Sigmoid colon (tissue), 7 donors: ENCODE measurements at regions of chr14 and their contacts with region 1.

Region 1: DNA sequence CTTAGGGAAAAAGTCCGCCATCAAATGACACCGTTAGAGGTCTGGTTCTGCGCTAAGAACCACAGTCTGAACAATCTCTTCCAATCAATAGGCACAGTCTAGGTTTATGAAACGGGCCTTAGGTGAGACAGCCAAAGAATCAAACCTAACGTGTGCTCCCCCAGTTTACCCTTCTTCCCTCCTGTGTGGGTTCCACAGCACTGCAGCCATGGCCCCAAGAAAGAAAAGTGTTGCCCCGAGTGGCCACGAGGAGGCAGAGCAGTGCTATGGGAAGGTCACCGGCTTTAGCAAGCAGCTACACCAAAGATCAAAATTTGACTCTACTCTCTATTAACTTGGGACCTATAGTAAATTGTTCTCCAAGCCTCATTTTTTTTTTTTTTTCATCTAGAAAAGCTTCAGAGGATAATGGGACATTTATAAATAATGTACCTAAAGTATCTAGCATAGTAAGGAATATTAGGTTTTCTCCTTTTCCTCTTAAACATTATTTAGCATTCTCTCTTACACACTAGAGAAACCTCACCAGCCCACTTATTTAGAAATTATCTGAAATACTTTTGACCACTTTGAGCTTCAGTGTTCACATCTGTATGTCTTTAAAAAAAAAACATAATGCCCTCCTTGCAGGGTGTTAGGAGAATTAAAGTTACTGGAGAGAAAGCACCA is 70.2 kb upstream of the GPHB5 start:
- DNase-seq: peak; percentile 78
- H3K4me3 ChIP-seq: no peak overlapping the region
- H3K27ac ChIP-seq: no peak overlapping the region
- H3K4me1 ChIP-seq: no peaks in the 10 kb centered on the region
- H3K27me3 ChIP-seq: no peaks in the 10 kb centered on the region
- CTCF ChIP-seq: peak; percentile 74 to 80 (median 76)
- EP300 ChIP-seq: no peak
- POLR2A ChIP-seq: no peak

Region 2: DNA sequence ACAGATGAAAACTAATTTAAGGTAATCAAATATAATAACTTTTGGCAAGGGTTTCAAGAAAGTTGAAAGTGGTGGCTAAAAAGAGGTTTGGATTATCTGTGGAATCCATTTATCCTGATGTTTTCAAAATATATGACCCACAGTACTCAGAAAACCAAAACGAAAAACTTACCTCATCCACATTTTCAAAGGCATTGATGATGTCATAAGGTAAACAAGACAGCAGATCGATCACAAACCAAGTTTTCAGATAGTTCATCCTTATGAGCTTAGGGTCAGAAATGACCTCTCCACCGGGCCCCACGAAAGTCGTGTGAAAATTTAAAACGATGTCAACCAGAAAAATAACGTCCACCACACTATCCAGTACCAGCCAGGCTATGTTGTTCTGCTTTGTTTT is 408.2 kb before region 1 on chr14:
- intact Hi-C with region 1: no loop called
- DNase-seq: no peak
- H3K4me3 ChIP-seq: no peak overlapping the region
- H3K27ac ChIP-seq: no peak overlapping the region
- H3K4me1 ChIP-seq: no peaks in the 10 kb centered on the region
- H3K27me3 ChIP-seq: no peaks in the 10 kb centered on the region
- CTCF ChIP-seq: no peak
- EP300 ChIP-seq: no peak
- POLR2A ChIP-seq: no peak

Region 3: DNA sequence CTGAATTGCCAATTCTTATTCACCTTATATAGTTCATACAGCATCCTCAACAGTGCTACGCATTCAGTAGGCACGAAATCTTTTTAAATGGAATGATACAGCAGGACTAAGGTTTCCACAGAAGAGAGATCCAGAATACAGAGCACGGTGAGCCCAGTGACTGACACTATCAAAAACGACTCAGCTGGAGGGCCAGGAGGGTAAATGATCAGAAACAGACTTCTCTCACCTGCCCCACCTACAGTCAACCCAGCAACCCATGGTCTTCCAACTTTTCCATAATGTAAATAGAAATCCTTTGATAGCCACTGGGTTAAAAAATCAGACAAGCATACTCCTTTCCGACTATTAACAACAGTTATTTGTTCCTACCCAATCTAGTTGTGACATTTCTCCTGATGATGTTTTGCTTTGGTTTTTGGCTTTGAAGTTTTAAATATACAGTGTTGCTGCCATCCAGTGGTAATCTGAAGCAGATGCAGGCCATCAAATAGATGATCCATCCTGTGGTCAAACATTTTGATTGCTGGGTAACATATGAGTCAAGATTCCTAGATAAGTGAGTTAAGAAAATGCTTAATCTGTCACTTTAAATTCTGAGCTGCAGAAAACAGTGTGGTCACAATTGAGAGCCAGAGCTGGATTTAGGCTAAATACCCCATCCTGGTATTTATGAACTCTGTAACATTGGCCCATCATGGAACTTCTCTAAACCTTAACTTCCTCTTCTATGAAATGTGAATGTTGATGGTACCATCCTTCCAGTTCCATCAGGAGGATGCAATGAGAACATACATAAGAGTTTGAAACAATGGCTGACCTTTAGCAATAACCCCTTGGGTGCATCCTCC is 112.2 kb before region 1 on chr14:
- intact Hi-C with region 1: no loop called
- DNase-seq: no peak
- H3K4me3 ChIP-seq: no peak overlapping the region
- H3K27ac ChIP-seq: no peak overlapping the region
- H3K4me1 ChIP-seq: peaks cover 0 to 5% (median 0%) of the 10 kb centered on the region in 4 donors
- H3K27me3 ChIP-seq: no peaks in the 10 kb centered on the region
- CTCF ChIP-seq: peak; percentile 65 to 81 (median 76)
- EP300 ChIP-seq: no peak
- POLR2A ChIP-seq: no peak

Region 4: GRCh38 chr14:63641473-63642228 is 252.8 kb after region 1 on chr14 and contains the start of gene WDR89:
- intact Hi-C with region 1: loop called (anchors 1 kb)
- DNase-seq: peak; percentile 99
- H3K4me3 ChIP-seq: peak within 1 kb of the TSS; percentile 42 to 69 (median 54)
- H3K27ac ChIP-seq: peak within 1 kb of the TSS; percentile 84 to 95 (median 89)
- H3K4me1 ChIP-seq: peaks cover 0 to 12% (median 6%) of the 10 kb centered on the region in 4 donors
- H3K27me3 ChIP-seq: no peaks in the 10 kb centered on the region
- CTCF ChIP-seq: peak; percentile 45 to 85 (median 75)
- EP300 ChIP-seq: peak in 1 of 4 donors; percentile 10
- POLR2A ChIP-seq: peak in 1 of 2 donors; percentile 46
- total RNA-seq, gene WDR89: 5.0 to 10.0 (median 7.9) TPM

Region 5: DNA sequence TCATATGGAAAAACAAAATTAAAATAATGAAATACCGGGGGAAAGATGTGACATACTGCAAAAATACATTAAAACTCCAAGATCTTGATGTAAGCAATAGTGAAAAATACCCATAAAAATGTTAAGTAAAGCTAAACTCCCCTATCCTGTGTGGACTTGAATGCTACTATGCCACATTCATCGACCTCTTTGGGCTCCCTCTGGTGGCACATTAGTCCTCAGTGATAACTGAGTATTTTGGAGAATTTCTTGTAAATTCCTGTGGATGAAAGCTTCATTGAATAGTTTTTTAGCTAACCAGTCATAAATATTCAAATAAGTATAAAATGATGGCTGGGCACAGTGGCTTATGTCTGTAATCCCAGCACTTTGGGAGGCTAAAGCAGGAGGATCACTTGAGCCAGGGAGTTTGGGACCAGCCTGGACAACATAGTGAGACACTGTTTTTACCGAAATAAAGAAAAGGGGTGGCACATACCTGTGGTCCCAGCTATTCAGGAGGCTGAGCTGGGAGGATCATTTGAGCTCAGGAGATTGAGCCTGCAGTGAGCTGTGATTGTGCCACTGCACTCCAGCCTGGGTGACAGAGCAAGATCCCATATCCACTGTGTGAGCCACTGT is 381.4 kb after region 1 on chr14:
- intact Hi-C with region 1: loop called (anchors 2 kb)
- DNase-seq: no peak
- H3K4me3 ChIP-seq: no peak overlapping the region
- H3K27ac ChIP-seq: no peak overlapping the region
- H3K4me1 ChIP-seq: no peaks in the 10 kb centered on the region
- H3K27me3 ChIP-seq: no peaks in the 10 kb centered on the region
- CTCF ChIP-seq: peak in 2 of 4 experiments; percentile 24 to 38
- EP300 ChIP-seq: no peak
- POLR2A ChIP-seq: no peak